ENCODE measurements at regions of chr15 and their contacts with region 1.

Region 1: GRCh38 chr15:84658080-84658787 is at the start of gene NMB:
- DNase-seq: peak; percentile 84 to 93
- ATAC-seq: peak; percentile 84
- H3K4me3 ChIP-seq: peak within 1 kb of the TSS; percentile 58 to 63
- H3K27ac ChIP-seq: peak within 1 kb of the TSS in 1 of 2 donors; percentile 84
- H3K4me1 ChIP-seq: no peaks in the 10 kb centered on the region
- H3K27me3 ChIP-seq: no peaks in the 10 kb centered on the region
- total RNA-seq, gene NMB: 5.2 to 12.5 TPM

Region 2: DNA sequence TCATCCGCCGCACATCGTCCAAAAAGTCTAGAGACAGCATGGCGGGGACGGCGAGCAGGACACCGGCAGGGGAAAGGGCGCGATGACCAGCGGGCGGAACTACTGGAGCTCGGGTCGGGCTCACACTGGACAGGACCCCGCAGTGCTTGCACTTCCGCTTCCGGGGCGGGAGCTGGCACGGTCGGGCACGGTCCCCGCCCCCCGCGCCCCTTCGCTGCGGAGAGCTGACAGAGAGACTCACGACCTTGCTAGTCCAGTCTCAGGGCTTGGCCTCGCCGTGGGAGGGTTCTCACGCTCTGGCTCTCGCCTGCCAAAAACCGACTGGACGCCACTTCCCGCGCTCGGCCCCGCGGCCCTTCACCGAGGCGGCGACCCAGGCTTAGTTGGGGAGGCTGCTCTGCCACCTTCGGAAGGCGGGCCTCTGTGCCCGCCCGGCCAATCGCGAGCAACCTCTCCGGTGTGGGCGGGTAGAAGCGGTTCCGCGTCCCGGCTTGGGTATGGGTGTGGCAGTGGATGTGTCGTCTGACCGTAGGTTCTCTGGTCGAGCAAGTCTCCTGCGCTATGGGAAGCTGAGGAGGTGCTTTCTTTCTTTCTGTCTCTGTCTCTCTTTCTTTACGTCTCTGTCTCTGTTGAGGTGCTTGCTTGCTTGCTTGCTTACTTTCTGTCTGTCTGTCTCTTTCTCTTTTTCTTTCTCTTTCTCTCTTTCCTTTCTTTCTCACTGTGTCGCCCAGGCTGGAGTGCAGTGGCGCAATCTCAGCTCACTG is 58.0 kb after region 1 on chr15 and contains the start of gene SEC11A:
- intact Hi-C with region 1: loop called in 1 of 2 experiments (anchors 5 kb)
- DNase-seq: peak; percentile 97 to 98
- ATAC-seq: peak; percentile 99
- H3K4me3 ChIP-seq: peak within 1 kb of the TSS; percentile 62 to 71
- H3K27ac ChIP-seq: peak within 1 kb of the TSS; percentile 78 to 79
- H3K4me1 ChIP-seq: no peaks in the 10 kb centered on the region
- H3K27me3 ChIP-seq: no peaks in the 10 kb centered on the region
- total RNA-seq, gene SEC11A: 99.3 to 115 TPM

Region 3: GRCh38 chr15:84818261-84819131 is 160.3 kb after region 1 on chr15:
- intact Hi-C with region 1: loop called in 1 of 2 experiments (anchors 5 kb)
- DNase-seq: no peak
- ATAC-seq: peak; percentile 43
- H3K4me3 ChIP-seq: peak overlapping the region; percentile 24 to 57
- H3K27ac ChIP-seq: peak overlapping the region; percentile 96 to 98
- H3K4me1 ChIP-seq: peaks cover 2% of the 10 kb centered on the region in 2 donors
- H3K27me3 ChIP-seq: no peaks in the 10 kb centered on the region